CD8-positive, alpha-beta T cell (primary cell): ENCODE measurements at regions of chr2 and their contacts with region 1.

Region 1: GRCh38 chr2:200888704-200889625 is at the starts of genes NIF3L1 and PPIL3:
- DNase-seq: peak; percentile 92 to 99 (median 97)
- ATAC-seq: peak; percentile 70
- H3K4me3 ChIP-seq: peak within 1 kb of the TSS; percentile 77 to 78
- H3K4me3 Mint-ChIP-seq: peak within 1 kb of the TSS; percentile 94
- H3K27ac ChIP-seq: peak within 1 kb of the TSS; percentile 96
- H3K27ac Mint-ChIP-seq: peak within 1 kb of the TSS; percentile 100
- H3K4me1 ChIP-seq: peaks cover 21% of the 10 kb centered on the region
- H3K4me1 Mint-ChIP-seq: peaks cover 55% of the 10 kb centered on the region
- H3K27me3 ChIP-seq: no peaks in the 10 kb centered on the region
- H3K27me3 Mint-ChIP-seq: no peaks in the 10 kb centered on the region
- CTCF ChIP-seq: no peak
- total RNA-seq, gene NIF3L1: 3.8 to 4.9 TPM
- total RNA-seq, gene PPIL3: 48.6 to 51.0 TPM

Region 2: DNA sequence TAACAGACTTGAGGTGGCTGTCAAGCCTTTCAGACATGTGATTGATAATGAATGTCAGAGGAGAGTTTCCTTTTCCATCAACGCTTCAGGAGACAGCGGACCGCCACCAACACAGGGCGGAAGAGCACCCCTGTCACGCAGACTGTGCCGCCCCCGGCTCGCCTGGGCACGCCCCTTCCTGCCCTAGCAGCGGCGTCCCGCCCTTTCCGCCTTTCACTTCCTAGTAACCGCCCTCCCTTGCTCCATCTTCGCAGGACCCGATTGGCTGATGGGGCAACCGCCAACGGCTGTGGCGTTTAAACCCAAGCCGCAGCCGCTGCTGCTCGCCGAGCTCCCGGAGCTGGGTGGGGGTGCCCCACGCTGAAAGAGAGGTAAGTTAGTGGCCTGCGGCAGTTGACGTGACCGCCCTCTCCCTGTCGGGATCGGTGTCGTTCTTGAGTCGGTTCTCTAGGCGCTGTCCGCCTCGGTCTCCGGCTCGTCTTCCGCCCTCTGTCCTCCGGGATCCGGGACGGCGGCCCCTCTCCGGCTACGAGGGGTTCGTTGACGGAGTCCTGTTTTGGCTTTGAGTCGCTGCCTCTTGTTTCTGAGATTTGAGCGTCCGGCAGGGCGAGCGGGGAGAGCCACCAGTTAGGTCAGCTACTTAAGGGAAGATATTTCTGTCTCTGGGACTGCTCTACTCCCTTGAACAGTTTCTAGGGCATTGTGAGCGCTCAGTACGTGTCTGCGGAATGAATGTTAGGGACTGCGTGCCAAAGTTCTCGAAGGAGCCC is 362.9 kb before region 1 on chr2 and contains the start of gene SGO2:
- CTCF ChIA-PET with region 1: no interaction called
- POLR2A ChIA-PET with region 1: no interaction called
- intact Hi-C with region 1: loop called in 1 of 2 experiments (anchors 2 kb)
- DNase-seq: peak; percentile 92 to 97 (median 95)
- ATAC-seq: peak; percentile 100
- H3K4me3 ChIP-seq: peak within 1 kb of the TSS; percentile 73 to 84
- H3K4me3 Mint-ChIP-seq: peak within 1 kb of the TSS; percentile 91
- H3K27ac ChIP-seq: peak within 1 kb of the TSS; percentile 18 to 71
- H3K27ac Mint-ChIP-seq: peak within 1 kb of the TSS; percentile 87
- H3K4me1 ChIP-seq: peaks cover 7% of the 10 kb centered on the region
- H3K4me1 Mint-ChIP-seq: peaks cover 10% of the 10 kb centered on the region
- H3K27me3 ChIP-seq: no peaks in the 10 kb centered on the region
- H3K27me3 Mint-ChIP-seq: no peaks in the 10 kb centered on the region
- CTCF ChIP-seq: no peak
- total RNA-seq, gene SGO2: 0.52 to 0.69 TPM

Region 3: DNA sequence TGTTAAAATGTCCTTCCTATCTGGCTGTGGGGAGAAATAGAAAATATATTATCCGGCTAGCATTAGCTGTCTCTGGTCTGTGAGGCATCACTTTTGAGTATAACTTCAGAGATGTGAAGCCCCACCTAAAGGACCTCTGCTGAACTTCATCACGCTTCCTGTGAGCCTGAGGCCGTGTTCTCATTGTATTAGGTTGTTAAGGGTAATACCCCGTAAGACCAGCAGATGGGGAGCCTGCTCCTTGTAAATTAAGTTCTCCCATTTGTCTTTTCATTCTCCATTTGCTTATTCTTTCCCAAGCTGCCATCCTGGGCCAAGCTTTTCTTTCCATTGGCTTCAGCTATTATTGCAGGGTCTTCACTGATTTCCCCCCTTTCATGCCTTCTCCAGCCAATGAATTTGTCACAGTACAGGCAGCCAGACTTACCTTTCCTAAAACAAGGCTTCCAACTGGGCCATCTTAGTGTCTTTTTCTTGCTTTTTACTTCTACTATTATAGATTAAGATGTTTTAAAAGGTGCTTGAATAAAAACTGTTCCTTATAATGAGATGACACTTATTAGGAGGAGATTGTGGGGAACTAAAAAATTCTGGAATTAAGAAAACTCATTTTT is 12.6 kb after region 1 on chr2:
- CTCF ChIA-PET with region 1: interaction called, 5 read pairs
- POLR2A ChIA-PET with region 1: interaction called, 3 read pairs
- intact Hi-C with region 1: loop called (anchors 1 kb)
- DNase-seq: peak; percentile 36 to 92 (median 73)
- ATAC-seq: peak; percentile 100
- H3K4me3 ChIP-seq: no peak overlapping the region
- H3K4me3 Mint-ChIP-seq: no peak overlapping the region
- H3K27ac ChIP-seq: peak overlapping the region in 1 of 2 experiments; percentile 4
- H3K27ac Mint-ChIP-seq: peak overlapping the region; percentile 45
- H3K4me1 ChIP-seq: peaks cover 4% of the 10 kb centered on the region
- H3K4me1 Mint-ChIP-seq: peaks cover 7% of the 10 kb centered on the region
- H3K27me3 ChIP-seq: no peaks in the 10 kb centered on the region
- H3K27me3 Mint-ChIP-seq: no peaks in the 10 kb centered on the region
- CTCF ChIP-seq: peak; percentile 84

Region 4: GRCh38 chr2:201257956-201258665 is 369.1 kb after region 1 on chr2:
- CTCF ChIA-PET with region 1: no interaction called
- POLR2A ChIA-PET with region 1: interaction called, 5 read pairs
- intact Hi-C with region 1: loop called in 1 of 2 experiments (anchors 1 kb)
- DNase-seq: peak; percentile 87 to 99 (median 94)
- ATAC-seq: peak; percentile 69
- H3K4me3 ChIP-seq: peak overlapping the region; percentile 45 to 48
- H3K4me3 Mint-ChIP-seq: peak overlapping the region; percentile 89
- H3K27ac ChIP-seq: peak overlapping the region; percentile 85 to 93
- H3K27ac Mint-ChIP-seq: peak overlapping the region; percentile 97
- H3K4me1 ChIP-seq: peaks cover 68% of the 10 kb centered on the region
- H3K4me1 Mint-ChIP-seq: peaks cover 75% of the 10 kb centered on the region
- H3K27me3 ChIP-seq: no peaks in the 10 kb centered on the region
- H3K27me3 Mint-ChIP-seq: no peaks in the 10 kb centered on the region
- CTCF ChIP-seq: no peak